ENCODE measurements at regions of chr17 and their contacts with region 1.

Region 1: DNA sequence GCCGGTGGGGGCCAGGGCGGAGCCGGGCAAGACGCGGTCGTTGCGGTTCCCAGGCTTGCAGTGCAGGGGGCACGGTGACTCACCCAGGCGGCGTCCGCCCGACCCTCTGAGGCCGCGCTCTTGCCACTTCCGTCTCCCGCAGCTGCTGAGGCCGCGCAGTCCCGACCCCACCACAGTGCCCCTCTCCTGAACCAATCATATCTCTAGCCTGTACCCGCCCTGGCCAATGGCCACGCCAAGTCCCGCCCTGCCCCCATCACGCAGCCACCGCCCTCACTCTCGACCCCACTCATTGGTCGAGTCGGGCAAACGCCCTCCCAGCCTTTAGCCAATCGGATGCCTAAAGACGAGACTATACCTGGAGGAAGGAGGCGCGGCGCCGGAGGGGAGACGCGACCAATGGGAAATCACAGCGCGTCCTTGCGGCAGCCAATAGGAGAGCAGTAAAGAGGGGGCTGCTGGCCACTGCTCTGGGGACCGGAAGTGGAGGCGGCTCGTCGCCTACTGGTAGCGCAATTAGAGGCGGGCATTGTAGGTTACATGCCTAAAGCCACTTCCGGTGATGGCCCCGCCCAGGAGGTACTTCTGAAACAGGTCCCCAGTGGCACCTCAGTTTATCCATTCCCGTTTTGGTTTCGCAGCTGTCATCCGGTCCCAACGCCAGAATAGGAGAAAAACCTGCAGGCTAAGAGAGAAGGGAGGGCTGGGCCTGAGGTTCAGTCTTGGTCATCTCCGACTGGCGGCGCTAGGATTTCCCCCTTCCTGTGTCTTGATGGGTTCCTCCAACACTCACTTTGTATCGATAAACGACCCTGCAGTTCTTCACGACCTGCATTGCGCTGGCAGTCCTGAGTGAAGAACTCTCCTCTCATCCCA is 3.5 kb upstream of the MTMR4 start:
- DNase-seq: peak; percentile 100
- ATAC-seq: peak; percentile 78
- H3K4me3 ChIP-seq: peak overlapping the region; percentile 88 to 99 (median 93)
- H3K4me3 Mint-ChIP-seq: peak overlapping the region; percentile 97
- H3K27ac ChIP-seq: peak overlapping the region; percentile 83 to 85
- H3K27ac Mint-ChIP-seq: peak overlapping the region; percentile 97
- H3K4me1 ChIP-seq: peaks cover 35 to 54% of the 10 kb centered on the region in 2 donors
- H3K4me1 Mint-ChIP-seq: peaks cover 43% of the 10 kb centered on the region
- H3K27me3 ChIP-seq: no peaks in the 10 kb centered on the region
- H3K27me3 Mint-ChIP-seq: no peaks in the 10 kb centered on the region
- CTCF ChIP-seq: no peak

Region 2: GRCh38 chr17:57849874-57850754 is 667.9 kb before region 1 on chr17 and contains the start of gene MRPS23:
- CTCF ChIA-PET with region 1: no interaction called
- POLR2A ChIA-PET with region 1: no interaction called
- intact Hi-C with region 1: loop called (anchors 10 kb)
- DNase-seq: peak; percentile 97
- ATAC-seq: peak; percentile 95
- H3K4me3 ChIP-seq: peak within 1 kb of the TSS; percentile 64 to 96 (median 85)
- H3K4me3 Mint-ChIP-seq: peak within 1 kb of the TSS; percentile 99
- H3K27ac ChIP-seq: peak within 1 kb of the TSS; percentile 86 to 92
- H3K27ac Mint-ChIP-seq: peak within 1 kb of the TSS; percentile 100
- H3K4me1 ChIP-seq: peaks cover 17 to 28% of the 10 kb centered on the region in 2 donors
- H3K4me1 Mint-ChIP-seq: peaks cover 39% of the 10 kb centered on the region
- H3K27me3 ChIP-seq: no peaks in the 10 kb centered on the region
- H3K27me3 Mint-ChIP-seq: no peaks in the 10 kb centered on the region
- CTCF ChIP-seq: no peak
- total RNA-seq, gene MRPS23: 25.4 and 32.3 TPM in 2 replicates

Region 3: DNA sequence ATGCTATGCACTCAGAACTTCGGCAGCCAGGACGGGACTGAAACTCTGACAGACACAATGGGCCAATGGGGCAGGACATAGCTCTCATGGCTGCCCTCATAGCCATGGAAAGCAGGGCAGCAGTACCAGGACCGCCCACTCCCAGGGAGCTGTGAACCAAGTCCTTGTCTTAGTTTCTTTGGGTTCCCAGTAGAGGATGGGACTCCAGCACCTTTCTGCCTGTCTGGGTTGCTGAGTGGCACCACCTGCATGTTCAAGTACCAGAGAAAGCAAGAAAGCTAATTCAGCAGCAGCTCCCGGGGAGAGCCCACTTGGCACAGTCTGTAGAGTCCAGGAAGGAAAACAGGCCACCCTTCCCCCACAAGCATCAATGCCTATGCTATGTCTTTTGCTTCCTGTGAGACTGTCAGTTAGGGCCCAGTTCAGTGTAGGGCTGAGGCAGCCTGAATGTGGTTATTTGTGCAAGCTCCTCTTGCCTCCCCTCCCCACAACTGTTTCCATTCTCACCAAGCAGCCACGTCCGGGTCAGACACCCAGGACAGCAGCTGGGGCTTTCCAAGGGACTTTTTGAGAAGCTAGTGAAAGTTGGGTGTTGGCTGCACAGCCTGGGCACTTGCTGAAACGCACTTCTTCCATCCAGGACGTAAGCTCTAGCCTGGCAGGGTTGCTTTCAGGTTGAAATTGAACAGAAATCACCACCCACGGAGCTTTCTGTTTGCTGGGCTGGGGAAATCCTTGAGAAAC is 173.8 kb before region 1 on chr17:
- CTCF ChIA-PET with region 1: no interaction called
- POLR2A ChIA-PET with region 1: interaction called, 3 read pairs
- intact Hi-C with region 1: loop called (anchors 2 kb)
- DNase-seq: peak; percentile 95
- ATAC-seq: peak; percentile 85
- H3K4me3 ChIP-seq: peak overlapping the region; percentile 56 to 82 (median 62)
- H3K4me3 Mint-ChIP-seq: peak overlapping the region; percentile 88
- H3K27ac ChIP-seq: peak overlapping the region; percentile 98 to 99
- H3K27ac Mint-ChIP-seq: peak overlapping the region; percentile 94
- H3K4me1 ChIP-seq: peaks cover 72 to 73% of the 10 kb centered on the region in 2 donors
- H3K4me1 Mint-ChIP-seq: peaks cover 82% of the 10 kb centered on the region
- H3K27me3 ChIP-seq: no peaks in the 10 kb centered on the region
- H3K27me3 Mint-ChIP-seq: no peaks in the 10 kb centered on the region
- CTCF ChIP-seq: no peak

Region 4: GRCh38 chr17:58504826-58505521 is 13.0 kb before region 1 on chr17:
- CTCF ChIA-PET with region 1: interaction called, 18 read pairs
- POLR2A ChIA-PET with region 1: interaction called, 19 read pairs
- intact Hi-C with region 1: loop called (anchors 1 kb)
- DNase-seq: peak; percentile 88
- ATAC-seq: peak; percentile 93
- H3K4me3 ChIP-seq: peak overlapping the region in 2 of 5 experiments; percentile 6 to 47
- H3K4me3 Mint-ChIP-seq: peak overlapping the region; percentile 68
- H3K27ac ChIP-seq: peak overlapping the region; percentile 91 to 92
- H3K27ac Mint-ChIP-seq: peak overlapping the region; percentile 99
- H3K4me1 ChIP-seq: peaks cover 20 to 25% of the 10 kb centered on the region in 2 donors
- H3K4me1 Mint-ChIP-seq: peaks cover 27% of the 10 kb centered on the region
- H3K27me3 ChIP-seq: no peaks in the 10 kb centered on the region
- H3K27me3 Mint-ChIP-seq: no peaks in the 10 kb centered on the region
- CTCF ChIP-seq: no peak

Region 5: DNA sequence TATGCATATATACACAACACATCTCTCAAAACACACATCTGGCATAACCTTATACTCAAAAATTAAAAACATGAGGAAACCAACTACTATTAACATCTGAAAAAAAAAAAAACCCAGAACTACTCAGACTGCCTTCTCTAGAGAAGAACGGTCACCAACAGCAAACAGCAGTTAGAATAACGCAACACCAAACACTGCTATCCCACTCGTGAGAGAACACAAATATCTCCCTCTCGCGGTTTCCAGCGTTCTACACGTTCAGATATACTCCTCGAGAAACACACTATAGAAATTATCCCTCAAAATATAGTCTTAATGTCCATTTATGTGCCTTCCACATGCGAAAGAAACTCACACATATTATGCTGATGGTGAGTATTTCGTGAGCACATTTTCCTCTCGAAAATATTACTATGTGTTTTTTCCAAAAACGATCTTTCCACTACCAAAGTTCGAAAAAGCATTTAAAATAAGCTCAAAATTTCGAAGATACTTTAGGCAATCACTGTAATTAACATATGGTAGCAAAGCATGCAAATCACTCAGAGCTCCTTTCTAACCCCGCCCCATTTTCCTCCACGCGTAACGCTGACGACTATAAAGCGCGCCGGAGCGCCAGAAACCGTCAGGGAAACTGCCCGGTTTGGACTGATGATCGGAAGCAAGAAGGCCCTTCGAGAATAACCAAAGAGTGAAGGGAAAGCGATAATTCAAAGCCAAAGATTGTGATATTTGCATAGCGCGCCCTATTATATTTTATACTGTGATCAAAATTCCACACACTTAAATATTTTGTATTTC is 113.8 kb after region 1 on chr17:
- CTCF ChIA-PET with region 1: interaction called, 22 read pairs
- POLR2A ChIA-PET with region 1: interaction called, 24 read pairs
- intact Hi-C with region 1: loop called (anchors 1 kb)
- DNase-seq: peak; percentile 97
- ATAC-seq: peak; percentile 82
- H3K4me3 ChIP-seq: peak overlapping the region; percentile 28 to 84 (median 57)
- H3K4me3 Mint-ChIP-seq: no peak overlapping the region
- H3K27ac ChIP-seq: peak overlapping the region; percentile 81 to 99
- H3K27ac Mint-ChIP-seq: no peak overlapping the region
- H3K4me1 ChIP-seq: peaks cover 9% of the 10 kb centered on the region in 2 donors
- H3K4me1 Mint-ChIP-seq: peaks cover 12% of the 10 kb centered on the region
- H3K27me3 ChIP-seq: no peaks in the 10 kb centered on the region
- H3K27me3 Mint-ChIP-seq: no peaks in the 10 kb centered on the region
- CTCF ChIP-seq: peak; percentile 43

Region 6: GRCh38 chr17:59004338-59005111 is 486.6 kb after region 1 on chr17:
- CTCF ChIA-PET with region 1: interaction called, 85 read pairs
- POLR2A ChIA-PET with region 1: interaction called, 5 read pairs
- intact Hi-C with region 1: loop called (anchors 1 kb)
- DNase-seq: peak; percentile 81
- ATAC-seq: peak; percentile 37
- H3K4me3 ChIP-seq: no peak overlapping the region
- H3K4me3 Mint-ChIP-seq: peak overlapping the region; percentile 7
- H3K27ac ChIP-seq: peak overlapping the region in 1 of 2 donors; percentile 52
- H3K27ac Mint-ChIP-seq: peak overlapping the region; percentile 72
- H3K4me1 ChIP-seq: peaks cover 16 to 22% of the 10 kb centered on the region in 2 donors
- H3K4me1 Mint-ChIP-seq: peaks cover 28% of the 10 kb centered on the region
- H3K27me3 ChIP-seq: no peaks in the 10 kb centered on the region
- H3K27me3 Mint-ChIP-seq: no peaks in the 10 kb centered on the region
- CTCF ChIP-seq: peak; percentile 99

Region 7: DNA sequence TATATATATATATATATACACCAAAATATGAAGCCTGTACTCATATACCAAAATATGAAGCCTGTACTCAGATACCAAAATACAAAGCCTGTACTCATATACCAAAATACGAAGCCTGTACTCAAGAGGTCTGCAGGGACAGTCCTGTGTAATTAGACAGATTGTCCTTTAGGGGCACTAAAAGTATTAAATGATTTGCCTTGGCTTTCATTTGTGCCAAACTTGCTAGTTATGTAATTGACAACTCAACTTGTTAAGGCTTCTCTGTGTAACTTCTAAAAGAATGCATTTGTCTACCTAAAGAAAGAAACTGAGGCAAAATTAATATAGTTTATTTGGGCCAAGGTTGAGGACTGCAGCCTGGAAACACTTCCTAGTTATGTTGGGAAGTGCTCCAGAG is 1016.6 kb after region 1 on chr17:
- CTCF ChIA-PET with region 1: no interaction called
- POLR2A ChIA-PET with region 1: no interaction called
- intact Hi-C with region 1: no loop called
- DNase-seq: no peak
- ATAC-seq: no peak
- H3K4me3 ChIP-seq: no peak overlapping the region
- H3K4me3 Mint-ChIP-seq: no peak overlapping the region
- H3K27ac ChIP-seq: no peak overlapping the region
- H3K27ac Mint-ChIP-seq: no peak overlapping the region
- H3K4me1 ChIP-seq: peaks cover 4 to 5% of the 10 kb centered on the region in 2 donors
- H3K4me1 Mint-ChIP-seq: peaks cover 7% of the 10 kb centered on the region
- H3K27me3 ChIP-seq: no peaks in the 10 kb centered on the region
- H3K27me3 Mint-ChIP-seq: peaks cover 3% of the 10 kb centered on the region
- CTCF ChIP-seq: no peak